IMR-90 (cell line): ENCODE measurements at regions of chr22 and their contacts with region 1.

Region 1: GRCh38 chr22:24503137-24503842 is 8.2 kb downstream of the UPB1 start:
- DNase-seq: peak; percentile 63
- ATAC-seq: peak; percentile 92
- H3K4me3 ChIP-seq: no peak overlapping the region
- H3K27ac ChIP-seq: no peak overlapping the region
- H3K4me1 ChIP-seq: peaks cover 5% of the 10 kb centered on the region
- H3K27me3 ChIP-seq: peaks cover 11% of the 10 kb centered on the region
- CTCF ChIP-seq: peak; percentile 83
- POLR2A ChIP-seq: no peak
- RAD21 ChIP-seq: peak; percentile 85

Region 2: DNA sequence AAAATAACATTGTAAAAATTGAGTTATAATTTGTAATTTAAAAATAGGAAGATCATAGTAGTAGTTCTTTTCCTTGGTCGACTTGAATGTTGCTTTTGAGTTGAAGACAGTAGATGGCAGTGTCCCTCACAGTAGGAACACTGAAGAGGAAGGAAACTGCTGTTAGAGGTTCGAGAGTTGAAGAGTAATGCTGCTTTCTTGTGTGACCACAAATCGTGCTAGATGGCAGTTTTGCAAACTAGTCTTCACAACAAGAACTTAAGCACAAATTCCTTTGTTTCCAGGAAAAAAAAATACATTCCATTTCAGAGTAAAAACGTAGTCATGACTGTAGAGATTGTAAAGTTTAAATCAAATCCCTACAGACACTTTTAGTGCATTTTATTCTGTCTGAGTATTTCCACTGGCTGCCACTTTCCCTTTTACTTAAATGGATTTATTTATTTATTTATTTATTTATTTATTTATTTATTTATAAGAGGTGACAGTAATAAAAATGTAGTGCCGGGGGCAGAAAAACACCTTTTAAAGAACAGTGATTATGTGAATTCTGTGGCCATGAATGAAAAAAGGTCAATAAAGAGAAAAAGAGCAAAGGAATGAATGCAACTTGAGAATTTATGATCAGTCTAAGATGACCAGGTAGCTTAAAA is 178.1 kb before region 1 on chr22:
- CTCF ChIA-PET with region 1: no interaction called
- POLR2A ChIA-PET with region 1: no interaction called
- dilution Hi-C with region 1: no loop called
- in situ Hi-C with region 1: no loop called
- intact Hi-C with region 1: loop called (anchors 1 kb)
- DNase-seq: peak; percentile 92
- ATAC-seq: peak; percentile 96
- H3K4me3 ChIP-seq: no peak overlapping the region
- H3K27ac ChIP-seq: no peak overlapping the region
- H3K4me1 ChIP-seq: peaks cover 2% of the 10 kb centered on the region; the same call in 1 of the 2 replicates
- H3K27me3 ChIP-seq: no peaks in the 10 kb centered on the region
- CTCF ChIP-seq: peak; percentile 86
- POLR2A ChIP-seq: no peak
- RAD21 ChIP-seq: peak; percentile 85

Region 3: GRCh38 chr22:24417901-24418641 is 85.2 kb before region 1 on chr22:
- CTCF ChIA-PET with region 1: no interaction called
- POLR2A ChIA-PET with region 1: no interaction called
- dilution Hi-C with region 1: no loop called
- in situ Hi-C with region 1: loop called (anchors 5 kb)
- intact Hi-C with region 1: loop called (anchors 1 kb)
- DNase-seq: peak; percentile 46
- ATAC-seq: no peak
- H3K4me3 ChIP-seq: no peak overlapping the region
- H3K27ac ChIP-seq: no peak overlapping the region
- H3K4me1 ChIP-seq: peaks cover 16% of the 10 kb centered on the region
- H3K27me3 ChIP-seq: peaks cover 3% of the 10 kb centered on the region
- CTCF ChIP-seq: no peak
- POLR2A ChIP-seq: no peak
- RAD21 ChIP-seq: no peak

Region 4: DNA sequence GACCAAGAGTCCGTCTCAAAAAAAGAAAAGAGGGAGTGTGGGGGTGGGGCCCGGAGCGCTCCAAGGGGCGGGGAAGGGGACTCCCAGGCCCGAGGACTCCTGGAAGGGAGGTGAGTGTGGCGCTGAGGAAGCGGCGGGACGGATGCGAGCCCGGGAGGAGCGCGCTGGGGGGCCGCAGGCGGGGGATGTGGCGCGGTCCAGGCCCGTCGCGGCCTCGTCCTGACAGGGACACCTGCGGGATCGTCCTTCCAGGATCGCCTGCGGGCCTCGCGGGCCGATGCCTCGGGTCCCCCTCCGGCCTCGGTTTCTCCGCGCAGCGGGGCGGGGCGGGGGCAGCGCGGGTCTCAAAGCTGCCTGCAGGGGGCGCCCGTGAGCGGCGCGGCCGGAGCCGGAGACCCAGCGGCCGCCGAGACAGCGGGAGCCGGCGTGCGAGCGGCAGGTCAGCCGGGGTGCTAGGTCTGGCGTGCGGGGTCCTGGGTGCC is 79.7 kb before region 1 on chr22:
- CTCF ChIA-PET with region 1: interaction called, 3 read pairs
- POLR2A ChIA-PET with region 1: no interaction called
- dilution Hi-C with region 1: no loop called
- in situ Hi-C with region 1: loop called (anchors 5 kb)
- intact Hi-C with region 1: loop called (anchors 1 kb)
- DNase-seq: no peak
- ATAC-seq: peak; percentile 91
- H3K4me3 ChIP-seq: peak overlapping the region; percentile 68
- H3K27ac ChIP-seq: no peak overlapping the region
- H3K4me1 ChIP-seq: no peaks in the 10 kb centered on the region
- H3K27me3 ChIP-seq: peaks cover 33% of the 10 kb centered on the region
- CTCF ChIP-seq: peak; percentile 83
- POLR2A ChIP-seq: no peak
- RAD21 ChIP-seq: peak; percentile 79

Region 5: GRCh38 chr22:25219948-25220442 is 716.7 kb after region 1 on chr22:
- CTCF ChIA-PET with region 1: no interaction called
- POLR2A ChIA-PET with region 1: no interaction called
- dilution Hi-C with region 1: no loop called
- in situ Hi-C with region 1: no loop called
- intact Hi-C with region 1: no loop called
- DNase-seq: no peak
- ATAC-seq: no peak
- H3K4me3 ChIP-seq: no peak overlapping the region
- H3K27ac ChIP-seq: no peak overlapping the region
- H3K4me1 ChIP-seq: no peaks in the 10 kb centered on the region
- H3K27me3 ChIP-seq: no peaks in the 10 kb centered on the region; the same call in 1 of the 2 replicates
- CTCF ChIP-seq: no peak
- POLR2A ChIP-seq: no peak
- RAD21 ChIP-seq: no peak